ENCODE measurements at regions of chr11 and their contacts with region 1.

Region 1: DNA sequence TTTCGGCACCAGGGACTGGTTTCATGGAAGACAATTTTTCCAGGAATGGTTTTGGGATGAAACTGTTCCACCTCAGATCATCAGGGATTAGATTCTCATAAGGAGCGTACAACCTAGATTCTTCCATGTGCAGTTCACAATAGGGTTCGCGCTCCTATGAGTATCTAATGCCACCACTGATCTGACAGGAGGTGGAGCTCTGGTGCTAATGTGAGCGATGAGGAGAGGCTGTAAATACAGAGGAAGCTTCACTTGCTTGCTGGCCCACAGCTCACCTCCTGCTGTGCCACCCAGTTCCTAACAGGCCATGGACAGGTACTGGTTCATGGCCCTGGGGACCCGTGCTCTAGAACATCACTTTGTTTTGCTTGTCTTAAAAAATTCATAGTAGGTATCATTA is 41.8 kb upstream of the AMPD3 start:
- DNase-seq: peak; percentile 71
- H3K4me3 Mint-ChIP-seq: no peak overlapping the region
- H3K27ac Mint-ChIP-seq: no peak overlapping the region
- H3K4me1 Mint-ChIP-seq: peaks cover 55% of the 10 kb centered on the region
- H3K27me3 Mint-ChIP-seq: peaks cover 17% of the 10 kb centered on the region

Region 2: GRCh38 chr11:10429526-10429925 is 16.3 kb after region 1 on chr11:
- CTCF ChIA-PET with region 1: interaction called, 12 read pairs
- DNase-seq: no peak
- H3K4me3 Mint-ChIP-seq: no peak overlapping the region
- H3K27ac Mint-ChIP-seq: no peak overlapping the region
- H3K4me1 Mint-ChIP-seq: no peaks in the 10 kb centered on the region
- H3K27me3 Mint-ChIP-seq: peaks cover 34% of the 10 kb centered on the region

Region 3: GRCh38 chr11:10455637-10456487 is 42.6 kb after region 1 on chr11:
- CTCF ChIA-PET with region 1: interaction called, 44 read pairs
- DNase-seq: peak; percentile 87
- H3K4me3 Mint-ChIP-seq: peak overlapping the region; percentile 91
- H3K27ac Mint-ChIP-seq: peak overlapping the region; percentile 95
- H3K4me1 Mint-ChIP-seq: peaks cover 79% of the 10 kb centered on the region
- H3K27me3 Mint-ChIP-seq: peaks cover 16% of the 10 kb centered on the region

Region 4: DNA sequence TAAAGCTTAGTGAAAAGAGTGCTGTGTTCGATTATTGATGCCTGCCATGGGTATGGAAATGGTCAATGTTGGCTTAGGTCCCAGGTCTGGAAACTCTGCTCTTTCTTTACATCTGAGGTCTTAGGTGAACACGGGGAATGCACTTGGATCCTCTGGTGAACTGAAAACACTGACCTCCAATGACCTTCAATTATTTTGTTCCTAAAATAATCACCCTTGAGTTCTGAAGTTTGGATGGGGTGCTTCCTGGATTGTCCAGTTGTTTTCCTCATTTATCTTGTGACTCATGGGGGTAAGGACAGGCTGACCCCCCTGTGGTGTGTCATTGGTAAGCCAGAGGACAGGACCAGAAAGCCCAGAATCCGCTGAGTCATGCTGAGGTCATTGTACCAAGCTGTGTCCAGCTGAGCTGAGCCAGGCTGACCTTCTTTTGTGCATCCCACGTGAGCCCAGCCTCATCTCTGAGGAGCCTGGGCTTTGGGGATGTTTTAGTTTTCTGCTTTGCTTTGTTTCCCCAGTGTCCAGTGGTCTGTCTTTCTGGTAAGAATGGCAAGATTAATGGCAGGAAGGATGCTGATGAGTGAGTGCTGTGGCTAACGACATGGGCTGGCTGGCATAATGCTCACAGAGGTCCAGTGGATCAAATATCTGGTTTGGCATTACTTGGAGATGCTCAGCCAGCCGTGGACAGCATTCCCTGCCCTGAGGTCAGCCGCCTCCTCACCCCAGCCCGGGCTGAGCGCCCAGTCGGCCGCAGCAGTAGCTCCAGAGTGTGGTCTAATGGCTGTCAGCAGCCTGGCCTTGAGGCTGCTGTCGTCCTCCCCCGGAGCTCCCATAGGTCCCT is 77.4 kb after region 1 on chr11:
- CTCF ChIA-PET with region 1: no interaction called
- DNase-seq: no peak
- H3K4me3 Mint-ChIP-seq: no peak overlapping the region
- H3K27ac Mint-ChIP-seq: no peak overlapping the region
- H3K4me1 Mint-ChIP-seq: peaks cover 11% of the 10 kb centered on the region
- H3K27me3 Mint-ChIP-seq: no peaks in the 10 kb centered on the region

Region 5: DNA sequence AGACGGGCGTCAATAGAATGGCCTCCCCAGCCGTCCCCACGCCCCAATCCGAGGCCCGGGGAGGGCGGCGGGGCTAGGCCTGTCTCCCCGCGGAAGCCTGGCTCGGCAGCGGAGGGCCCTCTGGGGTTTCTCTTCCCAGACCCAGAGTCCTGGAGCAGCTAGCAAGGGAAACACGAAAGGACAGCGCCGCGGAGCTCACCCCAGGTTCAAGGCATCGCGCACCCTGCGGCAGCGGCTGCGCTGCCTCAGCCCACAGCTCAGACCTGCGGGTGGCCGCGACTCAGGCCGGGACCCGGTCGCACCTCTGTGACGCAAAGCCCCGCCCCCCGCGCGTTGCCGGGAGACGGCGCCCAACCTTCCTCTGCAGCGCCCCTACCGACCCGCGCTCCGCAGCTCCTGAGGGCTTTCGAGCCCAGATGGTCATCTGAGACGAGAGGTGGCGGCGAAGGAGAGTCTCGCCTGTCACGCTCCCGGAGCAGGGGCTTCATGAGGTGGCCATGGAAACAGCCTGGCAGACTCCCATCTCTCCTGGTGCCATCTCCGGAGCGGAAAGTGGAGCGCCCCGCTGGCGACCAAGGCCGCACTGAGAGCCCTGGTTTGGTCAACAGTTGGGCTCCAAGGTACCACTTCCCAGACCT is 127.8 kb after region 1 on chr11 and contains the start of gene RNF141:
- CTCF ChIA-PET with region 1: interaction called, 21 read pairs
- DNase-seq: peak; percentile 96
- H3K4me3 Mint-ChIP-seq: peak within 1 kb of the TSS; percentile 87
- H3K27ac Mint-ChIP-seq: peak within 1 kb of the TSS; percentile 71
- H3K4me1 Mint-ChIP-seq: peaks cover 16% of the 10 kb centered on the region
- H3K27me3 Mint-ChIP-seq: peaks cover 21% of the 10 kb centered on the region

Region 6: GRCh38 chr11:10653926-10654810 is 240.9 kb after region 1 on chr11:
- CTCF ChIA-PET with region 1: interaction called, 128 read pairs
- DNase-seq: peak; percentile 49
- H3K4me3 Mint-ChIP-seq: no peak overlapping the region
- H3K27ac Mint-ChIP-seq: no peak overlapping the region
- H3K4me1 Mint-ChIP-seq: peaks cover 14% of the 10 kb centered on the region
- H3K27me3 Mint-ChIP-seq: peaks cover 4% of the 10 kb centered on the region

Region 7: DNA sequence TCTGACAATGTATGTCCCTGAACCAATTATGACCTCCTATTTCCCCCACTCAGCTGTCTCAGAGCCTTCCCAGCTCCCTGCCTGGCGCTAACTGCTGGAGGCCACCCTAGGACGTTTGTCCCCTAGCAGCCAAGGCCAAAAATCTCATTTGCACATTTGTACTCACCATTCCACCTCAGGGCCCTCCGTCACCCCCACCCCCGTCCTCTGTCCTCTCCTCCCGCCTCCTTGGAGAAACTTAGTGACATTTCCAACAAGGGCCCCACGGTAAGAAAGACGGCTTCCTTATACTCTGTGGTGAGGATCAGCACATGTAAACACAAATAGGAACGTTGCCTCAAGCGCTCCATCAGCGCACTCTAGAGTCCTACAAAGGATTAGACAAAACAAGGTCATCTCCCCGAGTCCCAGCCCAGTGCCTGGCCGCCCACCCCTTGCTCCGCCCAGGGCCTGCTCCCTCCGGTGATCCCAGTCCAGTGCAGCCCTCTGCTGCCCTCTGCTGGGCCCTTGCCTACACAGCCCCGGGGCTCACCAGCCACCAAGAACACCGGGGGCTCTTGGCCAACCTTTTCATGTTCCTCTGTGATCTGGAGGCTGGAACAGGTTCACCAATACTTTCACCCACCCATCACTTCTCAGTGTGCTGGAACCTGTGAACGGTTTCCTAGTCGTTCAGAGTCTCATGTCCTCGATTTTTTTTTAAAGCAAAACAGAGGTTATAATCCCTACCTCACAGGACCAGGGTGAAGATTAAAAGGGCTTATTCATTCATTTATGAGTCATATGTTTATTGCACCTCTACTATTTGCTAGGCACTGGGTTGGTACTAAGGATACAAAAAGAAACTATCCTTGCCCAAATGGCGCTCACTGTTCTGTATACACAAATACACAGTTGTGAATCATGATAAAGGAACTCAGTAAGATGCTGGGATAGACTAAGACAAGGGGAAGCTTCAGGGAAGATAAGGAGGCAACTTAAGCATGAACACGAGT is 322.5 kb after region 1 on chr11:
- CTCF ChIA-PET with region 1: interaction called, 35 read pairs
- DNase-seq: peak; percentile 89
- H3K4me3 Mint-ChIP-seq: no peak overlapping the region
- H3K27ac Mint-ChIP-seq: no peak overlapping the region
- H3K4me1 Mint-ChIP-seq: peaks cover 11% of the 10 kb centered on the region
- H3K27me3 Mint-ChIP-seq: peaks cover 33% of the 10 kb centered on the region